Activated CD4-positive, alpha-beta T cell treated with anti-CD3 and anti-CD28 coated beads, Interleukin-2, amount 10 ng/mL, durations not matched to agents 7 days and 5 days (primary cell): ENCODE measurements at regions of chr3 and their contacts with region 1.

Region 1: DNA sequence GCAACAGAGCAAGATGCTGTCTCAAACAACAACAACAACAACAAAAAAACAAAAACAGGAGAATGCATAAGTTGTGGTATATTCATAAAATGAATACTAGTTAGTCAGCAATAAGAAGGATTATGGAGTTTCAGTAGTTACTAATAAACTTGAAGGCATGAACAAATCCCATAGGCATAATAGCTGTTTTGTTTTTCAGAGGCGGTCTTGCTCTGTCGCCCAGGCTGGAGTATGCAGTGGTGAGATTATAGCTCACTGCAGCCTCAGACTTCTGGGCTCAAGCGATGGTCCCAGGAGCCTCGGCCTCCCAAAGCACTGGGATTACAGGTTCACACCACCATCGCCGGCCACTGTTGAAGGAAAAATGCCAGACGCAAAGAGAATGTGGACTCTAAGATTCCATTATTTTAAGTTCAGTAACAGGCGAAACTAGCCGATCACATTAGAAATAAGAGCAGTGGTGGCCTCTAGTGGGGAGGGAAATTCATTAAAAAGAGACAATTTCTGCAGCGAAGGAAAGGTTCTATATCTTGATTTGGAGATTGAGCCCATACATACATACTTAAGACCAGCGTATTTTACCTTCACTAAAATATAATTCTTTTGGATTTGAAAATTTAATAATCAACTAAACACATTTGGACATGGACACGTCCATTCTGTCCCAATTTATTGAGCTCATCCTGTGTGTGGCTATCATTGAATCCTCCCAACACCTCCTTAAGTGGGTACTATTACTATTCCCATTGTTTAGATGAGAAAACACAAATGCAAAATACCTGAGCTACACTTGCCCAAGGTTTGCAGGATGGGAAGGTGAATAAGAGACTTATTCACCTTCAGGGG is 27.4 kb upstream of the HDAC11 start:
- DNase-seq: peak; percentile 69
- H3K4me3 Mint-ChIP-seq: peak overlapping the region; percentile 85
- H3K27ac Mint-ChIP-seq: peak overlapping the region; percentile 90
- H3K4me1 Mint-ChIP-seq: peaks cover 26% of the 10 kb centered on the region
- H3K27me3 Mint-ChIP-seq: peaks cover 2% of the 10 kb centered on the region

Region 2: GRCh38 chr3:13091898-13092611 is 360.7 kb before region 1 on chr3:
- CTCF ChIA-PET with region 1: interaction called, 18 read pairs
- POLR2A ChIA-PET with region 1: no interaction called
- DNase-seq: peak; percentile 81
- H3K4me3 Mint-ChIP-seq: no peak overlapping the region
- H3K27ac Mint-ChIP-seq: no peak overlapping the region
- H3K4me1 Mint-ChIP-seq: peaks cover 10% of the 10 kb centered on the region
- H3K27me3 Mint-ChIP-seq: peaks cover 7% of the 10 kb centered on the region

Region 3: DNA sequence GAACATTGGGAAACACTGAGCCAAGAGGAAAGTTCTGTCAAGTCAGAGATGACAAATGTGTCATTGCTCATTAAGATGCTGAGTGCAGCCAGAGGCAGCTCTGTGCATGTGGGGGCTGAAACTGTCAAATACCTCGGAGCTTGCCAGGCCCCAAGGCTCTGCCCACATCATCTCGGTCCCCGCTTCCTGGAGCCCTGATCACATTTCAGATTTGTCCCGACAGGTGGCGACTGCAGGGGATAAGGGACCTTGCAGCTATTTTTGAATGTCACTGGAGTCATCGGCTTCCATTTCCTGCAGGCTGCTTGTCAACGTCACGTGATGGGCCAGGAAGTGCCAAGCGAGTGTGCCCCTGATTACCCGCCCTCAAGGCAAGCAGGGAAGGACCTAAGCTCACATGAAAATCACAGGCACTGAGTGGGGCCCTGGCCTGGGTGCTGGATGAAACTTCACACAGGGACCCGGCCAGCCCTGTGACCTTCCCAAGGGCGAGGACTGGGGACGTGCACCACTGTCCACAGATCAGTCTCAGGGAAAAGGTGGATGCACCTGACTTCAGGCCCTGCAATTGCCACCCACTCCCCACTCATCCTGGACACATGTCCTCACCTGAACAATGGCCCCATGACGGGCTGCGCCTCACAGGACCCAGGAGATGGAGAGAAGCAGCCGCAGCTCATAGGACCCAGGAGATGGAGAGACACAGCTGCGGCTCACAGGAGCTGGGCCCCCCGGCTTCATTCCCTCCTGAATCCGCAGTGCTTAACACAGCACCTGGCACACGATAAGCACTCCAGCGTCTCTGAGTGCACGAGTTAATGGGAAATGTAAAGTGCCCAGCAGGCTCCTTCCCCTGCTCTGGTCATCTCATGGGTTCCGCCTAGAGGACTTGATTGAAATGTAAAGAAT is 106.0 kb before region 1 on chr3:
- CTCF ChIA-PET with region 1: interaction called, 37 read pairs
- POLR2A ChIA-PET with region 1: no interaction called
- DNase-seq: peak; percentile 85
- H3K4me3 Mint-ChIP-seq: no peak overlapping the region
- H3K27ac Mint-ChIP-seq: peak overlapping the region; percentile 86
- H3K4me1 Mint-ChIP-seq: peaks cover 54% of the 10 kb centered on the region
- H3K27me3 Mint-ChIP-seq: no peaks in the 10 kb centered on the region

Region 4: DNA sequence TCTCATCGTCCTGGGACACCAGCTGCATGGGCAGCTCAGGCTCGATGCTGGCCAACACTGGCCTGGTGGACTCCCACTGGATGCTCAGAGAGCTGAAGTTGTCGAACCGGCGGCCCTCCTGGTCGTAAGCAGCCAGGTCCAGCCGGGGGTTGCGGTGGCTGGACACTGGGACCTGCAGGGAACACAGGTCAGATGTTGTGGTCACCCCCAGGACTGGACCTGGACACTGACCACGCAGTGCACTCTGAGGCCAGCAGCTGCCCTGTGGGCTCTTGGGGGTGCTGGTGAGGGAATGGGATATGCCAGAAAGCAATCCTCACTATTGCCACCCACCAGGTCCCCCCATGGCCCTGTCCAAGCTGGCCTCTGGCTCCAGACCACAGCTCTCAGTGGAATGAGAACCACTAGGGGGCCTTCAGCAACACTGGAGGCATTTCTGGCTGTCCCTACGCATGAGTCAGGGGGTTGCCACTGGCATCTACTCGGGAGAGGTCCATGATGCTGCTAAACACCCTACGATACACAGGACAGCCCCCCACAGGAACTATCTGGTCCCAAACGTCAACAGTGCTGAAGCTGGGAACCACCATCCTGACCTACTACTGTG is 98.7 kb before region 1 on chr3:
- CTCF ChIA-PET with region 1: interaction called, 37 read pairs
- POLR2A ChIA-PET with region 1: no interaction called
- DNase-seq: no peak
- H3K4me3 Mint-ChIP-seq: no peak overlapping the region
- H3K27ac Mint-ChIP-seq: no peak overlapping the region
- H3K4me1 Mint-ChIP-seq: peaks cover 41% of the 10 kb centered on the region
- H3K27me3 Mint-ChIP-seq: no peaks in the 10 kb centered on the region

Region 5: DNA sequence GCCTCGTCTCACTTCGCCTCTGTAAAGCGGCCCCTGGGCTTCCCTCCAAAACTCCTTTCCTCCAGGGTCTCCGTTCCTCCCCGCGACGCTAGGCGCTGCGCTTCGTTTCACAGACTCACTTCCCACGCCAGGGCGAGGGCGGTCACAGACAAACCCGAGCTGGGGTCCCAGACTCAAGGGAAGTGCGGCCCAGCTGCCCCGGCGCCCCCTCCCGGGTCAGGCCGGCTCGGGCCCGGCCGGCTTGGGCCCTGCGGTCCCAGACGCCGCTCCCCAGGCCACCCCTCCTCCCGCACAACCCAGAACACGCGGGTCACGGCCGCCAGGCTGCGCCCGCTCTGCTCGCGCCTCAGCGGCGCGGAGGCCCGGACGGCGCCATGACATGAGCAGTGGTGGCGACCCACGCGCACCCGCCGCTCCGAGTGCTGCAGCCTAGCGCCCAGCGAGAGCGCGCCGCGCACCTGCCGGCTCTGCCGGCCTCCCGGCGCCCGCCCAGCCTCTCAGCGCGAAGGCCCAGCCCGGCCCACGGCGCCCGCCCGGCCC is 33.1 kb before region 1 on chr3:
- CTCF ChIA-PET with region 1: interaction called, 11 read pairs
- POLR2A ChIA-PET with region 1: interaction called, 4 read pairs
- DNase-seq: peak; percentile 59
- H3K4me3 Mint-ChIP-seq: peak overlapping the region; percentile 90
- H3K27ac Mint-ChIP-seq: peak overlapping the region; percentile 87
- H3K4me1 Mint-ChIP-seq: peaks cover 65% of the 10 kb centered on the region
- H3K27me3 Mint-ChIP-seq: no peaks in the 10 kb centered on the region

Region 6: DNA sequence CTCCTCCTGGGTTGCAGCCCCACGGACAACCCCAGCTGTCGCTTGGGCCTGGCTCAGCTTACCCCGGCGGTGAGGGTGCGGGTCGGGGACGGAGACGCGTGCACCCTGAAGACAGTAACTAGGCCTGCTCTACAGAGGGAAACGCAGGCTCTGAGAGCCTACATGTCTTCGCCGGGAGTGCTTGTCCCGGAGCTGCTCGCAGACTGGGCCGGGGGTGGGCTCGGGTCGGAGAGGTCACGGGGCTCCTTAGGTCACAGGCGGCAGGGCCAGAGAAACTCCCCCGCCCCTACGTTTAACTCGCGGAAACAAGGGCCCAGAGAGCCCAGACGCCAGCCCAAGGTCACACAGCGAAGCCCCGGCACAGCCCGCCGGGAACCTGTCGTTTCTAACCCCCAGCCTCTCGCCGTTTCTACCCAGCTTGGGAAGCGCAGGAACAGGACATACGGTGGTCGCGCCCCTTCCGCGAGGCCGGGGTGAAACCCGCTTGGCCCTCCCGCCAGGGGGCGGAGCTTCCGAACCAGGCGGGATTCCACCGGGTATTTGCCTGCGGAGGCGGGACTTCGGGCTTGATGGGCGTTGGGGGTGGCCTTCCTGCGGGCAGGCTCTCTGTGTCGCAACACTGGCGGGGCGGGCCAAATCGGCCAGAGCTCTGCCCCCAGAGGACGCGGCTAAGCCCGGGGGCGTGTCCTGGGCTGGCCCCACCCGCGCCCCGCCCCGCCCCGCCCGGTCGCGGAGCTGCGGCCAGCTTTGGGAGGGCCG is 27.0 kb after region 1 on chr3 and contains the start of gene HDAC11:
- CTCF ChIA-PET with region 1: interaction called, 17 read pairs
- POLR2A ChIA-PET with region 1: no interaction called
- DNase-seq: peak; percentile 99
- H3K4me3 Mint-ChIP-seq: peak within 1 kb of the TSS; percentile 90
- H3K27ac Mint-ChIP-seq: peak within 1 kb of the TSS; percentile 92
- H3K4me1 Mint-ChIP-seq: peaks cover 14% of the 10 kb centered on the region
- H3K27me3 Mint-ChIP-seq: peaks cover 2% of the 10 kb centered on the region
- total RNA-seq, gene HDAC11: 1.6 to 2.3 TPM